Naive thymus-derived CD4-positive, alpha-beta T cell (primary cell): ENCODE measurements at regions of chr12 and their contacts with region 1.

Region 1: DNA sequence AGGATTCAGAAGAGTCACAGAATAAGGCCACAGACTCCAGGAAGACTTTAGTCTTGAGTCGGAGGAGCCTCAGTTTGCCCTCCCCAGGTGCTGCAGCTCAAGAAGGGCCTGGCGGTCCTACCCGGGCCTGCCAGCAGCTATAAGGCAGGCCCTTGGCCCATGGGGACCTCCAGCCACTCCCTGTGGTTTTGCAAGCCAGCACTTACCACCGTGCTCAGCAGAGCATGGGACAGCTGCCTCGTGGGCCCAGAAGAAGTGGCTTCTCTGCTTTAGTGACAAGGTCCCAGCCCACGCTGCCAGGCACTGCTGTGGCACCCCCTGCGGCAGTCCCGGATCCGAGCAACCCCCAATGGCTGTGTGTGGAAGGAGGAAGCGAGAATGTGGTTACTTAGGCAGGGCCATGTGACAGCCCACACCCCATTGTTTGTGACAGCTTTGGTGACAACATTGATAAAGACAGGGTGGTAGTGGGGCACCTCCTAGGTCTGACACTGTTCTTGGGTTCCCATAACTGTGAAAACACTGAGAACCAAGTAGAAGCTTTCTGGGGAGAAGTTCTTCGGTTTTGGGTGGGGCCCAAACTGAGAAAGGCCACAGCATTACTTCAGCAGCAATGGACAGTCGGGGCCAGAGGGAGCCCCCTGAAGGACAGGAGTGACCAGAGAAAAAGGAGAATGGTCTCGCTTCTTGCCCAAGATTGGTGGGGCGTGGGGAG is at the start of gene SELPLG:
- DNase-seq: peak; percentile 70 to 96 (median 93)
- ATAC-seq: peak; percentile 83
- H3K4me3 ChIP-seq: peak within 1 kb of the TSS; percentile 98
- H3K4me3 Mint-ChIP-seq: peak within 1 kb of the TSS; percentile 90 to 100 (median 99)
- H3K27ac ChIP-seq: peak within 1 kb of the TSS; percentile 89
- H3K27ac Mint-ChIP-seq: peak within 1 kb of the TSS; percentile 95 to 100 (median 98)
- H3K4me1 ChIP-seq: peaks cover 50 to 53% of the 10 kb centered on the region in 2 donors
- H3K4me1 Mint-ChIP-seq: peaks cover 50 to 73% (median 66%) of the 10 kb centered on the region in 7 donors
- H3K27me3 ChIP-seq: no peaks in the 10 kb centered on the region
- H3K27me3 Mint-ChIP-seq: no peaks in the 10 kb centered on the region
- total RNA-seq, gene SELPLG: 54.3 to 217 (median 154) TPM

Region 2: DNA sequence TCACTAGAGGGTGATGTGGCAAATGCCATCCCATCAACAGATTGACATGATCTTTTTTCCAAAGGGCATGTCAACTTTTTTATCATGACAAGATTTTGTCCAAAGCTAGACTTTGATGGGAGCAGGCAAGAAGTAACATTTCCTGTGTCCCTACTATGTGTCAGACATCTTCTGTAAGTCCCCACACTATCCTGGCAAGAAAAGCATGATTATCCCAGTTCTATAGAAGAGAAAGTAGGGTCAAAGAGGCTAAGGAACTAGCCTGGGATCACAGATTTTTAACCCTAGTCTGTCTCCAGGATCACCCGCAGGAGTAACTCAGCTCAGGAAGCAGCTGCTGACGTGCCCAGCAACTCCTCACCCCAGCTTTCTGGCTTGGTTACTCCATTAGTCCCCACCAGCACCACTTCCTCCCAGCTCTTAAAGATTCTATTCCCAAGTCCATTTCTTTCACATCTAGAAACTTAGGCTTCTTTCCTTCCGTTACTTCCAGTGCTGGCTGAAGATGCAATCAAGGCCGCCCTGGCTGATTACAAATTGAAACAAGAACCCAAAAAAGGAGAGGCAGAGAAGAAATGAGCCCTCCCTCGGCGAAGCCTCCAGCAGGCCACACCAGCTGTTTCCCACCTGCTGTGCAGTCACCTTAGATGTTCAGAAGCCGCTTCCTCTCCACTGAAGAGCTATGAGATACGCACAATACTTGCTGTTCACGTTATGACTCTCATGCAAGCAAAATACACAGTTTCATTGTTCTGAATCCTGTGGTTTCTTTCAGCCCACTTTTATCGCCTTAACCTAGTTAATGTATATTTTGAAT is 65.1 kb before region 1 on chr12:
- CTCF ChIA-PET with region 1: interaction called, 23 read pairs
- POLR2A ChIA-PET with region 1: interaction called, 200 read pairs
- intact Hi-C with region 1: loop called (anchors 1 to 2 kb)
- DNase-seq: peak; percentile 38 to 92 (median 87)
- ATAC-seq: peak; percentile 96
- H3K4me3 ChIP-seq: peak overlapping the region; percentile 24
- H3K4me3 Mint-ChIP-seq: peak overlapping the region; percentile 76 to 91 (median 83)
- H3K27ac ChIP-seq: peak overlapping the region; percentile 72
- H3K27ac Mint-ChIP-seq: peak overlapping the region; percentile 87 to 99 (median 98)
- H3K4me1 ChIP-seq: peaks cover 30 to 55% of the 10 kb centered on the region in 2 donors
- H3K4me1 Mint-ChIP-seq: peaks cover 26 to 96% (median 85%) of the 10 kb centered on the region in 7 donors
- H3K27me3 ChIP-seq: no peaks in the 10 kb centered on the region
- H3K27me3 Mint-ChIP-seq: no peaks in the 10 kb centered on the region

Region 3: DNA sequence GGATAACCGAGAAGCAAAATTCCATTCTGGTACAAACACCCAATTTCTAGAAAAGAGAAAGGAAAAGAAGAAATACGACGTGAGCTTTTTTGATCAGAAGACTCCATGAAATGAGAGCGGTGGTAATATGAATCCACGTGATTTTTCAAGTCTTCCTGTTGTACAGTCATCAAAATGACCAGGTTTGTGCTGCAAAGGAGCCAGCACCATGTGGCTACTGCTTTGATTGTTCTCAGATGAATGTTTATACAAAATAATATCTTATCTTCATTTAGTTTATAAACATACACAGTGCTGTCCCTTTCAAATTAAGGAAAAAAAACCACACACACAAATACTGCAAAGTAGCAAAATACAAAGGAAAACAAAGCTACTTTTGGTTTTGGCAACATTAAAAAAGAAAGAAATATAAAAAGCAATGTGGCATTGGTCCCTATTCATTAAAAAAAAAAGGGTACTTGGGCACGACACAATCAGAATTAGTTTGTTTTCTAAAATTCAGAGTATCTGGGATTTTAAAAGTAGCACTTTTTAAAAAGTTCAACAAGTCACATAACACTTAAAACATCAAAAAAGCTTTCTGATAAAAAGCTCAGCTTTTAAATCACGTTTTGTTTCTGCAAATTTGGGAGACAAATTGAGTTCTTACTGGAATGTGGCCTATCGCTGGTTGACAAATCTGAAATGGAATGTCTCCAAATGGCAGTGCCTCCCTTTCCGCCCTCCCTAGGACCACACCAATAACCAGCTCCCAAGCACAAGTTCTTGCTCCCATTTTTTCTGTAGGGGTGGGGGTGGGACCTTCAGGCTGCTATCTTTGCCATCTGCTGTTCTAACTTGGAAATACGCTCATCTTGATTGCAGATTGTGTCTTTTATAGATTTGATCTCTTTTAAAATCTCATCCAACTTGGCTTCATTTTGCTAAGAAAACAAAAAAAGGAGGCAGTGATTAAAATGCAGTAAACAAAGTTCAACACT is 13.2 kb after region 1 on chr12:
- CTCF ChIA-PET with region 1: interaction called, 32 read pairs
- POLR2A ChIA-PET with region 1: interaction called, 54 read pairs
- intact Hi-C with region 1: loop called (anchors 1 kb)
- DNase-seq: peak in 1 of 9 donors; percentile 26
- ATAC-seq: no peak
- H3K4me3 ChIP-seq: no peak overlapping the region
- H3K4me3 Mint-ChIP-seq: peak overlapping the region; percentile 53 to 89 (median 78)
- H3K27ac ChIP-seq: peak overlapping the region; percentile 50
- H3K27ac Mint-ChIP-seq: peak overlapping the region; percentile 75 to 97 (median 90)
- H3K4me1 ChIP-seq: peaks cover 0 to 27% of the 10 kb centered on the region in 2 donors
- H3K4me1 Mint-ChIP-seq: peaks cover 21 to 37% (median 34%) of the 10 kb centered on the region in 7 donors
- H3K27me3 ChIP-seq: no peaks in the 10 kb centered on the region
- H3K27me3 Mint-ChIP-seq: no peaks in the 10 kb centered on the region

Region 4: GRCh38 chr12:108664338-108665258 is 30.9 kb after region 1 on chr12:
- CTCF ChIA-PET with region 1: interaction called, 38 read pairs
- POLR2A ChIA-PET with region 1: interaction called, 44 read pairs
- intact Hi-C with region 1: loop called (anchors 1 kb)
- DNase-seq: peak; percentile 35 to 83 (median 78)
- ATAC-seq: peak; percentile 97
- H3K4me3 ChIP-seq: no peak overlapping the region
- H3K4me3 Mint-ChIP-seq: peak overlapping the region in 1 of 10 donors; percentile 24
- H3K27ac ChIP-seq: no peak overlapping the region
- H3K27ac Mint-ChIP-seq: peak overlapping the region in 8 of 9 donors; percentile 8 to 84 (median 75)
- H3K4me1 ChIP-seq: peaks cover 0 to 3% of the 10 kb centered on the region in 2 donors
- H3K4me1 Mint-ChIP-seq: peaks cover 5 to 17% (median 12%) of the 10 kb centered on the region in 7 donors
- H3K27me3 ChIP-seq: no peaks in the 10 kb centered on the region
- H3K27me3 Mint-ChIP-seq: no peaks in the 10 kb centered on the region

Region 5: GRCh38 chr12:108731105-108731865 is 97.6 kb after region 1 on chr12 and contains the start of gene CORO1C:
- CTCF ChIA-PET with region 1: interaction called, 3 read pairs
- POLR2A ChIA-PET with region 1: interaction called, 3 read pairs
- intact Hi-C with region 1: loop called (anchors 1 kb)
- DNase-seq: peak; percentile 90 to 99 (median 94)
- ATAC-seq: peak; percentile 88
- H3K4me3 ChIP-seq: peak within 1 kb of the TSS; percentile 99
- H3K4me3 Mint-ChIP-seq: peak within 1 kb of the TSS; percentile 94 to 99 (median 96)
- H3K27ac ChIP-seq: peak within 1 kb of the TSS; percentile 78
- H3K27ac Mint-ChIP-seq: peak within 1 kb of the TSS; percentile 79 to 98 (median 96)
- H3K4me1 ChIP-seq: peaks cover 4 to 6% of the 10 kb centered on the region in 2 donors
- H3K4me1 Mint-ChIP-seq: peaks cover 0 to 44% (median 19%) of the 10 kb centered on the region in 7 donors
- H3K27me3 ChIP-seq: no peaks in the 10 kb centered on the region
- H3K27me3 Mint-ChIP-seq: peaks cover 0 to 9% (median 0%) of the 10 kb centered on the region in 5 donors
- total RNA-seq, gene CORO1C: 7.6 to 71.8 (median 15.7) TPM

Region 6: DNA sequence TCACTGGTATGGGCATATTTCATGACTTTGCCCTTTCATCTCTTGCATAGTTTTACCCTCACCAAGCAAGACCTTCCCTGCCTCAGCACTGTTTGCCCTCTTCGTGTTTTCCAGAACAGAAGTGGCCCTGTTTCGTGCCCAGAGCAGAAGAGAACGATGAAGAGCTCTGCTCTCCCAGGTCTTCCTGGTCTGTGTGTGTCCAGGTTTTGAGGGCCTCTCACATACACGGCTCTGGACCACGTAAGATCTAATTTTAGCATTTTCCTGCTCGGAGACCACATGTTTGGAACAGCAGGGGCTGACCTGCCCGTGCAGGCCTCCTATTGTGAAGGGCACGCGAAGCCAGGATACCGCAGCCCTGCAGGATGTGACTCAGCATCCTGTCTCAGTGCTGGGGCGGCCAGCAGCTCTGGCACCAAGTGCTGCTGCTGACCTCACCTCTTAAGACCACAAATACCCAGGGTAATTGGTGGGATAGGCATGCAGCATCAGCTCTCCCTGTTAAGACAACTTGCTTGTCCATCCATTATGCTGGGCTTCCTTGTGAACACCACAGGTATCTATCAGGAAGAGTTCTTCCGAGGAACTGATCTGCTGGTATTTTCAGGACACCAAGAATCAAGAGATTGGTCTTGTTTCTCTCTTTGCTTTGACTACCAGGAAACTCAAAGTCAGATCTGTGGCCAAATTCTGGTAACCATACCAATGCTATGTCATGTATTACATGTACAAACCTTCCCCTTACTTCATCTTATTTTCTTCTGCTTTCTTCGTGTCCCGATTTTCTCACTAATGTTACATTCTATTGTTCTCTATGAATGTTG is 204.7 kb after region 1 on chr12:
- CTCF ChIA-PET with region 1: no interaction called
- POLR2A ChIA-PET with region 1: no interaction called
- intact Hi-C with region 1: loop called in 1 of 2 experiments (anchors 1 kb)
- DNase-seq: peak in 2 of 9 donors; percentile 32 to 73
- ATAC-seq: peak; percentile 93
- H3K4me3 ChIP-seq: no peak overlapping the region
- H3K4me3 Mint-ChIP-seq: peak overlapping the region in 9 of 10 donors; percentile 16 to 76 (median 50)
- H3K27ac ChIP-seq: peak overlapping the region; percentile 10
- H3K27ac Mint-ChIP-seq: peak overlapping the region; percentile 9 to 90 (median 63)
- H3K4me1 ChIP-seq: peaks cover 18% of the 10 kb centered on the region in 2 donors
- H3K4me1 Mint-ChIP-seq: peaks cover 17 to 63% (median 30%) of the 10 kb centered on the region in 7 donors
- H3K27me3 ChIP-seq: no peaks in the 10 kb centered on the region
- H3K27me3 Mint-ChIP-seq: no peaks in the 10 kb centered on the region

Region 7: DNA sequence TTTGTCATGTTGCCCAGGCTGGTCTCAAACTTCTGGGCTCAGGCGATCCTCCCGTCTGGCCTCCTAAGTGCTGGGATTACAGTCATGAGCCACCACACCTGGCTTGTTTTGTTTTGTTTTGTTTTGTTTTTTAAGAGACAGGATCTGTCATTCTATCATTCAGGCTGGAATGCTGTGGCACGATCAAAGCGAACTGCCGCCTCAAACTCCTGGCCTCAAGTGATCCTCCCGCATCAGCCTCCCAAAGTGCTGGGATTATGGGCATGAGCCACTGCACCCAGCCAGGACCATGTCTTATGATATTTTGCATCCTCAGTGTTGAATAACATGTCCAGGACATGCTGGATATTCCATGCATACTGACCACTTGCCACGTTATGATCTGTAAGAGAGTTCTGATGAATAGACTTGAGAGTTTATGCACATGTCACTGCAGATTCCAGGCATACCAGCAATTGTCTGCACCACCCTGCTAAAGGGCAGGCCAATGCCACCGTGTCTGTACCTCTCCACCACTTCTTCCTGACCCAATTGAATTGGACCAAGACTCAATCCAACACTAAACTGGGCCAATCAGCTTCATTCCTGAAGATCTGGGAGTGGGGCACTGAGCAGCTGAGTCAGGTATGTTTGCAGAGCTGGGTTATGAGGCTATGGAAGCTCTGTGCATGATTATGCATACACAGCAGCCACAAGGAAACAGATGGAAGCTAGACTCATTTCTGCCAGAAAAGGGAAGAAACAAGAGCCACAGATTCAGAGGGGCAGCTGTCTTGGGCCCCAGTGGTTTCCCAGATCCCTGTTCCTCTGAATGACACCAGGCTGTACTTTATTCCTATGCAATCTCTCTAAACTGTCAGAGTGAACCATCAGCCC is 274.0 kb after region 1 on chr12:
- CTCF ChIA-PET with region 1: no interaction called
- POLR2A ChIA-PET with region 1: no interaction called
- intact Hi-C with region 1: no loop called
- DNase-seq: no peak
- ATAC-seq: peak; percentile 51
- H3K4me3 ChIP-seq: no peak overlapping the region
- H3K4me3 Mint-ChIP-seq: no peak overlapping the region
- H3K27ac ChIP-seq: no peak overlapping the region
- H3K27ac Mint-ChIP-seq: no peak overlapping the region
- H3K4me1 ChIP-seq: no peaks in the 10 kb centered on the region
- H3K4me1 Mint-ChIP-seq: peaks cover 0 to 8% (median 0%) of the 10 kb centered on the region in 7 donors
- H3K27me3 ChIP-seq: no peaks in the 10 kb centered on the region
- H3K27me3 Mint-ChIP-seq: peaks cover 8 to 25% (median 12%) of the 10 kb centered on the region in 5 donors

Region 8: DNA sequence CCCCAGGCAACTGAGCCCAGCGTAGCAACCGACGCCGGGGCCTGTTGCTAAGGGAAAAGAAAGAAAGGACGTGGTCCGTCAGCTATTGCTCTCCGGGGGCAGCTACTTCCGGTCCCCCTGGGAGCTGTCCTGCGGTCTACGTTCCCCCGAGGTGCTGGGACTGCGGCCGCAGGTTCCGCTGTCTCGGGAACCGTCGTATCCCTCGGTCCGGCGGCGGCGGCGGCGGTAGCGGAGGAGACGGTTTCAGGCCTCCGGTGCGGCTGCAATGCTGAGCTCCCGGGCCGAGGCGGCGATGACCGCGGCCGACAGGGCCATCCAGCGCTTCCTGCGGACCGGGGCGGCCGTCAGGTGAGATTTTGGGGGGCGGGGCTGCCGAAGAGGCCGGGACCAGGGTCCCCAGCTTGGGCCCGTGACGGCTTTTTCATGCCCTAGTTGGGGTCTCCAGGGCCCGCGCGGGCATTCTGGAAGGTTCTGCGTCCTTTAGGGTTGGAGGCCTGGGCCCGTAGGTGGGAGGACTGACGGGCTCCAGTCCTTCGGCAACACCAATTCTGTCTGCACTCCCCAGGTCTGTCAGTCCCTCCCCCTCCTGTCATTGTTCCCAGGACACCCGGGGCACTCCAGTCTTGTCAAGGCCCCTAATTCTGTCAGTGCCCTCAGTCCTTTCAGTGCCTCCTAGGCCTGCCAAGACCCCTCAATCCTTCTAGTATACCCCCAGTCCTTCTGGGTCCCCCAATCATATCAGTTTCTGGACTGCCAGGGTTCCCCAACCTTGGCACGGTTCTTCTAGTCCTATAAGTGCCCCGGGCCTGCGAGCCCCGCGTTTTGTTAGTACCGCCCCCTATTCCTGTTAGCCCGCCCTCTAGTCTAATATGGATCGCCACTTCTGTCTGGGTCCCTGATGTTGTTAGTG is 419.0 kb after region 1 on chr12 and contains the start of gene USP30:
- CTCF ChIA-PET with region 1: no interaction called
- POLR2A ChIA-PET with region 1: interaction called, 3 read pairs
- intact Hi-C with region 1: loop called (anchors 1 to 2 kb)
- DNase-seq: peak; percentile 68 to 86 (median 77)
- ATAC-seq: peak; percentile 93
- H3K4me3 ChIP-seq: peak within 1 kb of the TSS; percentile 91
- H3K4me3 Mint-ChIP-seq: peak within 1 kb of the TSS; percentile 86 to 99 (median 96)
- H3K27ac ChIP-seq: peak within 1 kb of the TSS; percentile 89
- H3K27ac Mint-ChIP-seq: peak within 1 kb of the TSS; percentile 89 to 98 (median 95)
- H3K4me1 ChIP-seq: peaks cover 13% of the 10 kb centered on the region in 2 donors
- H3K4me1 Mint-ChIP-seq: peaks cover 14 to 27% (median 17%) of the 10 kb centered on the region in 7 donors
- H3K27me3 ChIP-seq: no peaks in the 10 kb centered on the region
- H3K27me3 Mint-ChIP-seq: no peaks in the 10 kb centered on the region
- total RNA-seq, gene USP30: 7.8 to 15.7 (median 12.9) TPM